CD4-positive, alpha-beta memory T cell (primary cell): ENCODE measurements at regions of chr1 and their contacts with region 1.

Region 1: GRCh38 chr1:234610348-234611152 is 572 bp upstream of the IRF2BP2 start:
- DNase-seq: peak; percentile 90 to 93 (median 91)
- H3K4me3 ChIP-seq: peak overlapping the region; percentile 67 to 72
- H3K4me3 Mint-ChIP-seq: peak overlapping the region; percentile 88 to 95 (median 94)
- H3K27ac ChIP-seq: peak overlapping the region; percentile 92
- H3K27ac Mint-ChIP-seq: peak overlapping the region; percentile 98 to 100 (median 99)
- H3K4me1 ChIP-seq: peaks cover 47% of the 10 kb centered on the region
- H3K4me1 Mint-ChIP-seq: peaks cover 34 to 65% (median 47%) of the 10 kb centered on the region in 4 donors
- H3K27me3 ChIP-seq: no peaks in the 10 kb centered on the region
- H3K27me3 Mint-ChIP-seq: peaks cover 0 to 6% of the 10 kb centered on the region in 2 donors

Region 2: DNA sequence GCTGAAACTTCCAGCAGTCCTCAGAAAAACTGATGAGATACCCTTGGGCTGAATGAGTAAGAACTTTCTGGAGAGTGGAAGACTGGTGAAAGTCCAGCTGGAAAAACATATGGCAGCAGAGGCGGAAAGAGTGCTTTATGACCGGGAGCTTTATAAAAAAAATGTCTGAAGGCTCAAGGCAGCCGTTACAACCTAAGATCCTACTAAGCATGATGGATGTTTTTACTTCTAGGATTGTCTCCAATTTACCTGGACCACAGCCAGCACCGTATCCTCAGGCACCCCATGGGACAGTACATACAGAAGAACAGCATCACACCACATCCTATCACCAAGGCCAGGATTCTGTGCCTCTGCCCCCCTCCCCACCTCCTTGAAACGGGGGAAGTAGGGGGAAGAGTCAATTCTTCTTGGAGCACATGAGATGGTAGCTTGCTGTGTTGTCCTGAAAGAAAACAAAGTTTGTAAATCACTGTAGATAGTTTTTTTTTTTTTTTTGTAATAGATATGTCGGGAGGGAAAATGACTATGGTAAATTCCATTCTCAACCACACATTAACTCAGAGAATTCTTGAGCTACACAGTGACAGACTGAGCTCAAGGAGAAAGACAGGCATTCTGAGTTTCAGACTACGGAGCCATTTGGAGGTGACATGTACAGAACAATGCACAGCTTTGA is 11.2 kb after region 1 on chr1:
- CTCF ChIA-PET with region 1: interaction called, 6 read pairs
- POLR2A ChIA-PET with region 1: interaction called, 13 read pairs
- intact Hi-C with region 1: no loop called
- DNase-seq: no peak
- H3K4me3 ChIP-seq: no peak overlapping the region
- H3K4me3 Mint-ChIP-seq: no peak overlapping the region
- H3K27ac ChIP-seq: no peak overlapping the region
- H3K27ac Mint-ChIP-seq: no peak overlapping the region
- H3K4me1 ChIP-seq: no peaks in the 10 kb centered on the region
- H3K4me1 Mint-ChIP-seq: no peaks in the 10 kb centered on the region
- H3K27me3 ChIP-seq: no peaks in the 10 kb centered on the region
- H3K27me3 Mint-ChIP-seq: no peaks in the 10 kb centered on the region

Region 3: GRCh38 chr1:234722904-234723720 is 112.6 kb after region 1 on chr1:
- CTCF ChIA-PET with region 1: interaction called, 39 read pairs
- POLR2A ChIA-PET with region 1: interaction called, 272 read pairs
- intact Hi-C with region 1: loop called (anchors 1 kb)
- DNase-seq: peak in 1 of 5 donors; percentile 82
- H3K4me3 ChIP-seq: peak overlapping the region; percentile 0 to 41
- H3K4me3 Mint-ChIP-seq: peak overlapping the region; percentile 70 to 89 (median 82)
- H3K27ac ChIP-seq: peak overlapping the region; percentile 96
- H3K27ac Mint-ChIP-seq: peak overlapping the region; percentile 95 to 100 (median 98)
- H3K4me1 ChIP-seq: peaks cover 66% of the 10 kb centered on the region
- H3K4me1 Mint-ChIP-seq: peaks cover 45 to 85% (median 65%) of the 10 kb centered on the region in 4 donors
- H3K27me3 ChIP-seq: no peaks in the 10 kb centered on the region
- H3K27me3 Mint-ChIP-seq: peaks cover 0 to 3% of the 10 kb centered on the region in 2 donors

Region 4: GRCh38 chr1:234772345-234773147 is 162.0 kb after region 1 on chr1:
- CTCF ChIA-PET with region 1: interaction called, 9 read pairs
- POLR2A ChIA-PET with region 1: interaction called, 77 read pairs
- intact Hi-C with region 1: loop called (anchors 1 kb)
- DNase-seq: peak; percentile 81 to 96 (median 82)
- H3K4me3 ChIP-seq: no peak overlapping the region
- H3K4me3 Mint-ChIP-seq: peak overlapping the region; percentile 65 to 89 (median 84)
- H3K27ac ChIP-seq: peak overlapping the region; percentile 58
- H3K27ac Mint-ChIP-seq: peak overlapping the region; percentile 91 to 99 (median 98)
- H3K4me1 ChIP-seq: peaks cover 54% of the 10 kb centered on the region
- H3K4me1 Mint-ChIP-seq: peaks cover 42 to 56% (median 49%) of the 10 kb centered on the region in 4 donors
- H3K27me3 ChIP-seq: peaks cover 11% of the 10 kb centered on the region
- H3K27me3 Mint-ChIP-seq: no peaks in the 10 kb centered on the region

Region 5: DNA sequence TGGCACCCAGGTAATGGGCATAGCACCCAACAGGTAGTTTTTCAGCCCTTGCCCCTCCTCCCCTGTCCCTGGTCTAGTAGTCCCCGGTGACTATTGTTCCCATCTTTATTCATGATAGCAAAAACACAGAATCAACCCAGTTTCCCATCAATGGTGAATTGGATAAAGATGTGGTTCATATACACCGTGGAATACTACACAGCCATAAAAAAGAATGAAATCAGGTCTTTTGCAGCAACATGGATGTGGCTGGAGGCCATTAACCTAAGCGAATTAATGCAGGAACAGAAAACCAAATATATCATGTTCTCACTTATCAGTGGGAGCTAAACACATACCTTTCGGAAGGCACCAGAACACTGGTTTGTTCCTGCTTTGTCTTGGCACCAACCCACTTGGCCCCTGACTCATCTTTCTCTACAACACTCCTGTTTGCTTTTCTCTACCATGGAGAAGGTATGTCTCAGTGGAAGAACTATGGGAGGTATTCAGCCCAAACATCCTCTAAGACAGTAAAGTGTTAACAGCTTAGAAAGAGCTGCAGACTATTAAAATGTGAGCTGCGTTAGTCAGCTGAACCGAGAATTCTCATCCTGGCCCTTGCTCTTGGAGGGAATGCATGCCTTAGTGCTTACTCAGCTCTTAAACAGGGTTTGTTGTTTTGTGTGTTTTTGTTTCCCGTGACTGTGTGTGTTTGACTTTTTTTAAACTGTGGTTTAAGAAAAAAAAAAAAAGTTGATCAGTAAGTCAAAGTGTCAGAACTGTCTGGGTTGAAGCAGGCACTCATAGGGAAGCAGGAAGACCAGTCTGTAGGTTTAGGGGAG is 315.1 kb after region 1 on chr1:
- CTCF ChIA-PET with region 1: no interaction called
- POLR2A ChIA-PET with region 1: interaction called, 46 read pairs
- intact Hi-C with region 1: no loop called
- DNase-seq: peak in 4 of 5 donors; percentile 33 to 55 (median 46)
- H3K4me3 ChIP-seq: peak overlapping the region; percentile 27 to 48
- H3K4me3 Mint-ChIP-seq: peak overlapping the region; percentile 73 to 92 (median 84)
- H3K27ac ChIP-seq: no peak overlapping the region
- H3K27ac Mint-ChIP-seq: peak overlapping the region; percentile 85 to 99 (median 92)
- H3K4me1 ChIP-seq: peaks cover 49% of the 10 kb centered on the region
- H3K4me1 Mint-ChIP-seq: peaks cover 31 to 49% (median 43%) of the 10 kb centered on the region in 4 donors
- H3K27me3 ChIP-seq: no peaks in the 10 kb centered on the region
- H3K27me3 Mint-ChIP-seq: no peaks in the 10 kb centered on the region

Region 6: GRCh38 chr1:234978397-234979295 is 368.1 kb after region 1 on chr1:
- CTCF ChIA-PET with region 1: interaction called, 33 read pairs
- POLR2A ChIA-PET with region 1: interaction called, 104 read pairs
- intact Hi-C with region 1: loop called (anchors 1 kb)
- DNase-seq: peak; percentile 72 to 87 (median 77)
- H3K4me3 ChIP-seq: peak overlapping the region in 1 of 2 donors; percentile 33
- H3K4me3 Mint-ChIP-seq: peak overlapping the region; percentile 43 to 93 (median 79)
- H3K27ac ChIP-seq: peak overlapping the region; percentile 88
- H3K27ac Mint-ChIP-seq: peak overlapping the region; percentile 96 to 99 (median 97)
- H3K4me1 ChIP-seq: peaks cover 65% of the 10 kb centered on the region
- H3K4me1 Mint-ChIP-seq: peaks cover 40 to 83% (median 53%) of the 10 kb centered on the region in 4 donors
- H3K27me3 ChIP-seq: no peaks in the 10 kb centered on the region
- H3K27me3 Mint-ChIP-seq: no peaks in the 10 kb centered on the region

Region 7: GRCh38 chr1:235866913-235867845 is 1256.6 kb after region 1 on chr1:
- CTCF ChIA-PET with region 1: no interaction called
- POLR2A ChIA-PET with region 1: no interaction called
- intact Hi-C with region 1: loop called (anchors 5 kb)
- DNase-seq: peak; percentile 95 to 100 (median 99)
- H3K4me3 ChIP-seq: peak overlapping the region; percentile 72 to 86
- H3K4me3 Mint-ChIP-seq: peak overlapping the region; percentile 77 to 99 (median 96)
- H3K27ac ChIP-seq: peak overlapping the region; percentile 100
- H3K27ac Mint-ChIP-seq: peak overlapping the region; percentile 98 to 100 (median 99)
- H3K4me1 ChIP-seq: peaks cover 31% of the 10 kb centered on the region
- H3K4me1 Mint-ChIP-seq: peaks cover 26 to 60% (median 40%) of the 10 kb centered on the region in 4 donors
- H3K27me3 ChIP-seq: no peaks in the 10 kb centered on the region
- H3K27me3 Mint-ChIP-seq: no peaks in the 10 kb centered on the region